AG04450 (cell line): ENCODE measurements at regions of chr22 and their contacts with region 1.

Region 1: DNA sequence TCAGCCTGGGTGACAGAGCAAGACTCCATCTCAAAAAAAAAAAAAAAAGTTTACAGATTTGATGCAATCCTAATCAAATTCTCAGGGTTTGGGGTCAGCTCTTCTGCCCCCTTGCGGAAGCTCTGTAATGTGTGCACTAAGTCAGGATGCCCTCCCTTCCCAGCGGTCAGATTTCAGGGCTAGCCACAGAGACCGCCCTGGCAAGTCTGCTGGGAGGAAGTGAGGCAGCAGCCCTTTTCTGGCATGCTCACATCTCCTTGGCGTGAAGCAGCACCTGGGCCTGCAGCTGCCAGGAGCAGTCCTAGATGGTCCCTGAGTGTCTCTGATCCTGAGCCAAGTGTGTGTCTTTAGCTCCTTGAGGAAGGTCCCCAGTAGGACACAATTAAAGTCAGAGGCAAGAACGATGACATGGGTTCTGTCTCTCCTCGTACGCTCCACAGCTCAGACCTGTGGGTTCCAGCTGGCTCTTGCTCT is 10.9 kb upstream of the APOBEC3C start:
- DNase-seq: peak; percentile 67
- H3K4me3 ChIP-seq: no peak overlapping the region
- H3K27ac ChIP-seq: peak overlapping the region; percentile 21
- H3K27me3 ChIP-seq: peaks cover 4% of the 10 kb centered on the region
- CTCF ChIP-seq: peak; percentile 83

Region 2: DNA sequence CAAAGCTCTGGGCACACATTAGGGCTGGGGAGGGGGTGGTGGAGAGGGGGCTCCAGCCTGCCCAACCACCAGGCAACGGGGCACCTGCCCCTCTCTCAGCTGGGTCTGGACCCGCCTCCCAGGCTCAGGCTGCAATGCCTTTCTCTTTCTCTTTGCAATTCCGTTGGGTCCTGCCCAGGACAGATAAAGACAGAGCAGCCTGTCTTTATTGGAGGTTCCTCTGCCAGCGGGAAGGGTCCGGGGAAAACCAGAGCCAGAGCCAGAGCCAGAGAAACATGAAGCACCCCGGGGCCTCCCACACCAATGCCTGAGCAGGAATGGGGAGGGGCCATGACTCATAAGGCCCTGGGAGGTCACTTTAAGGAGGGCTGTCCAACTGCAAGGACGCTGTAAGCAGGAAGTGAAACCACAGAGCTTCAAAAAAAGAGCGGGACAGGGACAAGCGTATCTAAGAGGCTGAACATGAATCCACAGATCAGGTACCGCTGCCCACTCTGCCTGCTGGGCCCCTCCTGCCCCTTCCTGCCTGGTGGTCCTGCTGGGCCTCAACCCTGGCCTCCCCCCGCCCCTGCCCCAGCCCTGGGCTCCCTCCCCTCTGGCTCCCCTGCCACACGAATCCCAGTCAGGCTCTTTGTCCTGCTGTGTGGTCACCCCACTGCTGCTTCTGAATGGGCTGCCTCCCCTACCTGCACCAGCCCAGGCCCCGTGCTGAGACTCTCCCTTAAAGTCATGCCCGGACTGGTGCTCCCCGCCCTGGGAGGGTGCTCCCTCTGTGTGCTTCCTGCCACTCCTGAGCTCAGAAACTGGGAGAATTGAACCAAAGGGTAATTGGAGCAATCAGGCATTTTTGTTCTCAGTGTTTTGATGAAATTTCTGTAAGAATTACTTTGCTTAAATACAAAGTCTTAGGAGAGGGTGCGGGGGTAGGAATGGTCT is 20.9 kb before region 1 on chr22 and contains the start of gene APOBEC3B:
- CTCF ChIA-PET with region 1: interaction called, 11 read pairs
- POLR2A ChIA-PET with region 1: interaction called, 3 read pairs
- DNase-seq: peak; percentile 84
- H3K4me3 ChIP-seq: peak within 1 kb of the TSS; percentile 53
- H3K27ac ChIP-seq: peak within 1 kb of the TSS; percentile 39
- H3K27me3 ChIP-seq: no peaks in the 10 kb centered on the region
- CTCF ChIP-seq: no peak
- polyA plus RNA-seq, gene APOBEC3B: 12.5 TPM in 2 replicates